Heart left ventricle (tissue), 16 donors: ENCODE measurements at regions of chr20 and their contacts with region 1.

Region 1: GRCh38 chr20:354298-355064 is 7.6 kb downstream of the NRSN2 start:
- DNase-seq: peak; percentile 72 to 84 (median 72)
- ATAC-seq: peak; percentile 85 to 95 (median 90)
- H3K4me3 ChIP-seq: no peak overlapping the region
- H3K27ac ChIP-seq: no peak overlapping the region
- H3K4me1 ChIP-seq: peaks cover 0 to 8% (median 0%) of the 10 kb centered on the region in 12 donors
- H3K27me3 ChIP-seq: no peaks in the 10 kb centered on the region
- CTCF ChIP-seq: peak; percentile 93 to 98 (median 96)
- POLR2A ChIP-seq: no peak

Region 2: GRCh38 chr20:335686-336439 is 18.6 kb before region 1 on chr20:
- intact Hi-C with region 1: no loop called
- DNase-seq: no peak
- ATAC-seq: no peak
- H3K4me3 ChIP-seq: no peak overlapping the region
- H3K27ac ChIP-seq: no peak overlapping the region
- H3K4me1 ChIP-seq: no peaks in the 10 kb centered on the region
- H3K27me3 ChIP-seq: no peaks in the 10 kb centered on the region
- CTCF ChIP-seq: no peak
- POLR2A ChIP-seq: no peak

Region 3: DNA sequence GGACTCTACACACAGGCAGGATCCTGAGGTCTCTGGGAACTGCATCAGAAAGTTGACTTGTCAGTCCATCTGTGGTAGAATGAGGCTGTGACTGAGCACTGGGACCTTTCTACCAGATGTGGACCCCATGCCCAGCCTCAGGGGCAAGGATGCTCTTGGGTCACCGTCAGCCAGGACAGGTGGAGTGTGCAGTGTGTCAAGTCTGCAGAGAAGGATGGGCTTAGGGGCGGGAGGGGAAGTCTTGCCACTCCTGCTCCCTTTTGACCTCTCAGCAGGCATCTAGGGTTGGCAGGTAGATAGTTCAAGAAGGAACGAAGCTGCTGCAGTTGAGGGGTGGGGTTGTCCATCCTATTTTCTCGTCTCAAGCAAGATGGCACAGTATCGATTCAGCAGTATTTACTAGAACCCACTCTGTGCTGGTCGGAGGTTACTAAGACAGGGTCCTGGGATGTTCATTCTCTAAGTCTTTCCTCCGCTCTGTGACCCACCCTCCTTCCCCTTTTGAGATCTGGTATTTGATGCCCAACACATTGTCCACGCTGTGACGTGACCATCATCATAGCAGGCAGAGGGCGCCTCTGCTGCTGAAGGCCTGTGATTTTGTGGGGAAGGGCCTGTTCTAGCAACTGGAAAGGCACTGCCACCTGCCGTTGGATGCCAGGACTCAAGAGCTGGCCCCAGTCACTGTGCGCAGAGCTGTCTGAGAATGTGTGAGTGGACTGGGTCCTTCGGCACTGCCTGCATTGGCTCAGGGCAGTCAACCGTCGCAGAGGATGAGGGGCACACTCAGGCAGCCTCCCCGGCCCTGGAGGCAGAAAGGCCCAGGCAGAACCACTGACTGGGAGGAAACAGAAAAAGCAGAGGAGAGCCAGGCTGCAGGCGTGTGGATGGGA is 76.8 kb after region 1 on chr20:
- intact Hi-C with region 1: loop called in 3 of 10 experiments (anchors 5 to 10 kb)
- DNase-seq: peak in 4 of 5 donors; percentile 46 to 64 (median 56)
- ATAC-seq: peak; percentile 56 to 80 (median 66)
- H3K4me3 ChIP-seq: no peak overlapping the region
- H3K27ac ChIP-seq: peak overlapping the region in 2 of 12 donors; percentile 9 to 20
- H3K4me1 ChIP-seq: peaks cover 0 to 22% (median 3%) of the 10 kb centered on the region in 12 donors
- H3K27me3 ChIP-seq: no peaks in the 10 kb centered on the region
- CTCF ChIP-seq: peak; percentile 26 to 72 (median 50)
- POLR2A ChIP-seq: no peak

Region 4: DNA sequence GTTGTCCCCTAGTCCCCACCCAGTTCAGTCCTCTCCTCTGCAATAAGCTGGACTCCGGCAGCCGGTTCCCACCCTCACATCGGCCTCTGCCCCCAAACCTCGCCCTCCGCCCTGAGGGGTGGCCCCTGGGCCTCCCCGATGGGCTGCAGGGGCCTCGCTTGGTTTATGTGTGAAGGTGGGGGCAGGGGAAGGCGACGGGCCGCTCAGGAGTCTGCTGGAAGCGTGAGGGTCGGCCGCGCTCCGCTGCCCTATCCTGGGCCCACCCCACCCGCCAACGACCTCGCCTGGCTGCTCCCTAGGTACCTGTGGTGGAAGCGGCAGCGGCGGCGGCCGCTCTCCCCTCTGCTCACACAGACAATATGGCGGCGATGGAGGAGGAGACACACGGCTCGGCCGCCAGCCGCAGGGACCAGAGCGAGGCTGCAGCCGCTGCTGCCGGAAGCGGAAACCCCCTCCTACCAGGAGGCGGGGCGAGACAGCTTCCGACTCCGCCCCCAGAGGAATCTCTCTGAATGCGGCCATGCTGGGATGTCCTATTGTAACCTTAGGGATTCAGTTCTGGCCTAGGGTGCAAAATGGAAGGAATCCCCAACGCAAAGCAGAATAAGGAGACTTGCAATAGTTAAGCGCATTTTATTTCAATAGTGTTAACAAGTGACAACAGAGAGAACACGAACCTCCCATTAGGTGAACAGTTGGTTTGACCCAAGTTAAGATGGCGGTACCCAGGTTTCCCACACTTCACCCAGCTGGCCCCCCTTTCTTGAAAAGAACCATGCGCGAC is 189.1 kb after region 1 on chr20 and contains the start of gene CSNK2A1:
- intact Hi-C with region 1: loop called in 2 of 10 experiments (anchors 5 kb)
- DNase-seq: peak; percentile 95 to 97 (median 96)
- ATAC-seq: peak; percentile 98 to 99 (median 98)
- H3K4me3 ChIP-seq: peak within 1 kb of the TSS; percentile 71 to 99 (median 90)
- H3K27ac ChIP-seq: peak within 1 kb of the TSS; percentile 88 to 96 (median 92)
- H3K4me1 ChIP-seq: peaks cover 8 to 55% (median 36%) of the 10 kb centered on the region in 12 donors
- H3K27me3 ChIP-seq: no peaks in the 10 kb centered on the region
- CTCF ChIP-seq: no peak
- POLR2A ChIP-seq: peak; percentile 33 to 82
- total RNA-seq, gene CSNK2A1: 107 to 136 (median 126) TPM

Region 5: DNA sequence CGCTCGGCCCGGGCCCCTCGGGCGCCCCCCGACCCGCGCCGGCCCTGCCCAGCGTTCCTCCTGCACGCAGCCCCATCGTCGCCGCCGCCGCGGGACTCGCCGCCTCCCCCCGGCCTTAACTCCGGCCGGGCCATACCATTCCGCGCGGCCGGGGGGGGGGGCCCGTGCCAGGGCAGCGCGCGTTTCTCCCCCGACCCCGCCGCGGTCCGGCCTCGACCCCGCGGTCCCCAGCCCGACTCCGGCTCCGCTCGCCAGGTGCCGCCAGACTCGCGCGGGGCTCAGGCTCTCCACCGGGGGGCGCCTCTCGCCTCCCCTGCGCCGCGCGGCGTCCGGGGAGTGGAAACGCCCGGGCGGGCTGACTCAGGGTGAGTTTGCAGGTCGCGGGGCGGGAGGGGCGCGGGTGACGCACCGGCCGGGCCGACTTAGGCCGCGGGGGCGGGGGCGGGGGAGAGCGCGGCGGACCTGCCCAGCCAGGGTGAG is 298.7 kb after region 1 on chr20 and contains the start of gene SRXN1:
- intact Hi-C with region 1: loop called in 6 of 10 experiments (anchors 5 to 10 kb)
- DNase-seq: peak; percentile 94 to 96 (median 95)
- ATAC-seq: peak; percentile 81 to 96 (median 96)
- H3K4me3 ChIP-seq: peak within 1 kb of the TSS; percentile 66 to 88 (median 73)
- H3K27ac ChIP-seq: peak within 1 kb of the TSS; percentile 81 to 99 (median 94)
- H3K4me1 ChIP-seq: peaks cover 0 to 39% (median 23%) of the 10 kb centered on the region in 12 donors
- H3K27me3 ChIP-seq: no peaks in the 10 kb centered on the region
- CTCF ChIP-seq: peak; percentile 41 to 74 (median 64)
- POLR2A ChIP-seq: peak; percentile 46 to 58
- total RNA-seq, gene SRXN1: 25.3 to 147 (median 39.1) TPM

Region 6: GRCh38 chr20:739736-740135 is 385.3 kb after region 1 on chr20:
- intact Hi-C with region 1: loop called in 9 of 10 experiments (anchors 5 to 10 kb)
- DNase-seq: no peak
- ATAC-seq: no peak
- H3K4me3 ChIP-seq: no peak overlapping the region
- H3K27ac ChIP-seq: no peak overlapping the region
- H3K4me1 ChIP-seq: peaks cover 0 to 3% (median 0%) of the 10 kb centered on the region in 12 donors
- H3K27me3 ChIP-seq: peaks cover 0 to 3% (median 0%) of the 10 kb centered on the region in 9 donors
- CTCF ChIP-seq: no peak
- POLR2A ChIP-seq: no peak